ENCODE measurements at regions of chr15 and their contacts with region 1.

Region 1: DNA sequence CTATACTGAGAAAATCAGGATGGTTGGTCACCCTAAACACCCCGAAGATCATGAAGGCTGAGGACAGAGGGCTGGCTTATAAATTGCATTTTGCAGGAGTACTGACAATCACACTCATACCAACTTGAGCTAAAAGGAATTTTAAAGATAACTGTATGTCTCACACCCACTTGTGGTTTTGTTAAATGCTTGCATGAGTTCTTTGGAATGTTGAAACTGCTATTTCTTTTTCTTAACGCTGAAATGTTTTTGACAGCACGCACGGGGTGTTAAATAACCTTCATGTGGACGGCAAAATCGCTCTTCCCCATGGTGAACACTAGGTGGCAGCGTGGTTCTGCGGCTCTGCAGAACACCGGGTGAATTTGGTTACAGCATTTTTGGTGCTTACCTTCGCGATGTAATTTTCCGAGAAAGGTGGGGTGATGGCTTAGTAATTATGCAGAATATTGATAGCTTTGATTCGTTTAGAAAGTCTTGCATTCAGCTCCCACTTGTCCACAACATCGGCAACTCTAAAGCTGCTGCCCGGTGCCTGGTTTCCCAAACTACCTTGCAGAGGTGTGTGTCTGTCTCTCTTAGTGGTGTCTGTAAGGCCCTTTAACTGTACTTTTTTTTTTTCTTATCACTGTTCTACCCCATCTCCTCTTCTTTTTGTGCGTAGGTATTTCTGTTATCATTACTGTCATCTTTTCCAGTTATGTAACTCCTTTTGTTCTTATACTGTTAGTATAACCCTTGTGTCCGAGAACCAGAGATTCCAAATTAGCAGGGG is 51.7 kb downstream of the ARNT2 start:
- DNase-seq: peak; percentile 78 to 83
- ATAC-seq: peak; percentile 79 to 92
- H3K4me3 ChIP-seq: no peak overlapping the region
- H3K27ac ChIP-seq: no peak overlapping the region
- H3K4me1 ChIP-seq: peaks cover 14% of the 10 kb centered on the region
- CTCF ChIP-seq: peak; percentile 99
- EP300 ChIP-seq: no peak
- POLR2A ChIP-seq: no peak
- RAD21 ChIP-seq: peak; percentile 98 to 99

Region 2: DNA sequence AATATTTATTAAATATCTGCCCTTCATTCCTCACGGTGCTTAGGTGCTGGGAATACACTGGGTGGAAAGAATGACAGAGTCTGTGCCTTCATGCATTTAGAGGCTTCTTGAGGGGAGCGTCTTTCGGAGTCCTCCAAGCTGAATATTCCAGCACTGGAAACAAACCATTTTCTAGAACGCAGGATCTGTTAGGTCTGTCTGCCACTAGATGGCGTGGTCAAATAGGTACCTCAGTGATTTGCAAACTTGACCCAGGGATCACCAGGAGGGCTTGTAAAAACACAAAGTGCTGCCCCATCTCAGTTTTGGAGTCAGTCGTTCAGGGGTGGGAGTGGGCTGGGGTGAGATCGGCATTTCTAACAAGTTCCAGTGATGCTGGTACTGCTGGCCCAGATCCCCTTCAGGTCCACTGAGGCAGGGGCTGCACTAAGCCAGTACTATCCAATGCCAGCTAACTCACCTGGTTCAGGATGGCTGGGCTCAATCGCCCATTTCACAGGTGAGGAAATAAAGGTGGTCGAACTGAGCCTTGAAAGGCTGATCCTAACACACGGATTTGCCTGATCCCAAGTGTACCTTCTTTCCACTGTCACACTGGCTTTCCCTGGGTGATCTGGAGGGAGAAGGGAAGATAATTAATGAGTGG is 36.8 kb before region 1 on chr15:
- CTCF ChIA-PET with region 1: interaction called, 10 read pairs
- POLR2A ChIA-PET with region 1: no interaction called
- DNase-seq: peak; percentile 56 to 73
- ATAC-seq: peak; percentile 58 to 88; a peak in 3 of 6 replicates
- H3K4me3 ChIP-seq: no peak overlapping the region
- H3K27ac ChIP-seq: peak overlapping the region in 1 of 2 experiments; percentile 68; a peak in 3 of 6 replicates
- H3K4me1 ChIP-seq: peaks cover 24% of the 10 kb centered on the region
- CTCF ChIP-seq: peak; percentile 85
- EP300 ChIP-seq: no peak
- POLR2A ChIP-seq: no peak
- RAD21 ChIP-seq: peak; percentile 58 to 60

Region 3: GRCh38 chr15:80445300-80446041 is 10.4 kb before region 1 on chr15:
- CTCF ChIA-PET with region 1: interaction called, 34 read pairs
- POLR2A ChIA-PET with region 1: no interaction called
- DNase-seq: no peak
- ATAC-seq: no peak
- H3K4me3 ChIP-seq: no peak overlapping the region
- H3K27ac ChIP-seq: no peak overlapping the region
- H3K4me1 ChIP-seq: no peaks in the 10 kb centered on the region
- CTCF ChIP-seq: no peak
- EP300 ChIP-seq: no peak
- POLR2A ChIP-seq: no peak; the same call in 1 of the 2 replicates
- RAD21 ChIP-seq: no peak

Region 4: DNA sequence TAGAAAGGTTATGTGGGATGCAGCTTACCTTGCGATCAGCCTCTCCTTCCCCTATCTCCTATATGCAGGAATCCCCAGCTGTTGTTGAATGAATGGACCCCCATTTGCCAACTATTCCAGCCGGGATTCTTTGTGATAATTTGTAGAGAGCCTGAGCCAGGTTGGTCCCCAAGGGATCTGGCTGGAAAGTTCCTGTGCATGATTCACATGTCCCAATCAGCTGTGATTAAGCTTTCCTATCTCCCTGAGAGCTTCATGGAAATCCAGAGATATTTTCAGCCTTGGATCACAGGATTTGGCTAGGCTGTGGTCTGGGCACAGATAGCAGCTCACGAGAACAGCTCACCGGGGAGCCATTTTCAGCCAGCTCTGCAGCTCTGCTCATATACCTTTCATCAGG is 25.1 kb after region 1 on chr15:
- CTCF ChIA-PET with region 1: interaction called, 125 read pairs
- POLR2A ChIA-PET with region 1: no interaction called
- DNase-seq: no peak
- ATAC-seq: peak; percentile 38 to 74; a peak in 3 of 6 replicates
- H3K4me3 ChIP-seq: no peak overlapping the region
- H3K27ac ChIP-seq: peak overlapping the region in 1 of 2 experiments; percentile 12; a peak in 1 of 6 replicates
- H3K4me1 ChIP-seq: peaks cover 15% of the 10 kb centered on the region; the same call in 2 of the 3 replicates
- CTCF ChIP-seq: no peak
- EP300 ChIP-seq: no peak
- POLR2A ChIP-seq: no peak
- RAD21 ChIP-seq: no peak

Region 5: DNA sequence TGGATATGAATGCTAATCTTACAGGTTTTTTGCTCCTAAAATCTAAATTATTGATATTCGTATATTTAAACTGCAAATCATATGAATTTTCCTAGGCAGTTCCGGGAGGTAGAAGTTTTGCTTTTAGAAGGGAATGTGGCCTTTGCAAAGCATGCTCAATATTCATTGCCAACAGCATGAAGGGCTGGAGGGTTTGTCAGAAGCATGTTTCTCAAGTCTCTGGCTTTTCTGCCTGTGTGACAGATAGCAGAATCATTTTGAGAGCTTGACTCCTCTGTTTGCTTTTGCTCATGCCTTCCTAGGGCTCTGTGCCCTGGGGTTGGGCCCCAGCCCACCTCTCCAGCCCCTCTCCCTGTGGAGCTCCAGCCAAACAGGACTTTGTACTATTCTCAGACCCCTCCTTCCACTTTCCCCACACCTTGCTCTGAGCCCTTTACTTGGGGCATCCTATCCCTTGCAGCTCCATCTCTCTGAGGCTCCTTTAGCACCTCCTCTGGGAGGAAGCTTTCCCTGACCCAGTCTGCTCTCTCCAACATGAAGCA is 39.6 kb after region 1 on chr15:
- CTCF ChIA-PET with region 1: interaction called, 10 read pairs
- POLR2A ChIA-PET with region 1: no interaction called
- DNase-seq: no peak
- ATAC-seq: peak in 1 of 2 experiments; percentile 49; a peak in 3 of 6 replicates
- H3K4me3 ChIP-seq: no peak overlapping the region
- H3K27ac ChIP-seq: peak overlapping the region; percentile 42 to 79; a peak in 5 of 6 replicates
- H3K4me1 ChIP-seq: peaks cover 32% of the 10 kb centered on the region
- CTCF ChIP-seq: no peak
- EP300 ChIP-seq: no peak
- POLR2A ChIP-seq: no peak
- RAD21 ChIP-seq: no peak